Gastrocnemius medialis (tissue), 4 donors: ENCODE measurements at regions of chr6 and their contacts with region 1.

Region 1: DNA sequence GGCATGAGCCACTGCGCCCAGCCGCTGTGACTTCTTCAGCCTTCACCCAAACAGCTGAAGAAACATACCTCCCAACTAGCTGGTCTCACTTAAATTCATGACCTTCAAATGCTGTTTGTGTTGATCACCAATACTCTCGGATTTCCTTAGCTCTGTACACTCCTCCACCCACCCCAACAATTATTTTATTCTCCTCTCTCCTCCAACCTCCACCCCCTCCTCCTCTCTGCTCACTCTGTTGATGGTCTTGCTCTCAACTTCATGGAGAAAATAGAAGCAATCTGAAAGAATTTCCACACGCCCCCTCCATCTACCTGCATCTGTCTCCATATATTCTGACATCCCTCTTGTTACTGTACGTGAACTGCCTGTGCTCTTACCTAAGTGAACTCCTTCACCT is 6.6 kb upstream of the DLK2 start:
- DNase-seq: no peak
- ATAC-seq: no peak
- H3K4me3 ChIP-seq: no peak overlapping the region
- H3K27ac ChIP-seq: no peak overlapping the region
- H3K4me1 ChIP-seq: no peaks in the 10 kb centered on the region
- H3K27me3 ChIP-seq: peaks cover 15 to 34% (median 20%) of the 10 kb centered on the region in 3 donors
- CTCF ChIP-seq: no peak
- POLR2A ChIP-seq: no peak

Region 2: DNA sequence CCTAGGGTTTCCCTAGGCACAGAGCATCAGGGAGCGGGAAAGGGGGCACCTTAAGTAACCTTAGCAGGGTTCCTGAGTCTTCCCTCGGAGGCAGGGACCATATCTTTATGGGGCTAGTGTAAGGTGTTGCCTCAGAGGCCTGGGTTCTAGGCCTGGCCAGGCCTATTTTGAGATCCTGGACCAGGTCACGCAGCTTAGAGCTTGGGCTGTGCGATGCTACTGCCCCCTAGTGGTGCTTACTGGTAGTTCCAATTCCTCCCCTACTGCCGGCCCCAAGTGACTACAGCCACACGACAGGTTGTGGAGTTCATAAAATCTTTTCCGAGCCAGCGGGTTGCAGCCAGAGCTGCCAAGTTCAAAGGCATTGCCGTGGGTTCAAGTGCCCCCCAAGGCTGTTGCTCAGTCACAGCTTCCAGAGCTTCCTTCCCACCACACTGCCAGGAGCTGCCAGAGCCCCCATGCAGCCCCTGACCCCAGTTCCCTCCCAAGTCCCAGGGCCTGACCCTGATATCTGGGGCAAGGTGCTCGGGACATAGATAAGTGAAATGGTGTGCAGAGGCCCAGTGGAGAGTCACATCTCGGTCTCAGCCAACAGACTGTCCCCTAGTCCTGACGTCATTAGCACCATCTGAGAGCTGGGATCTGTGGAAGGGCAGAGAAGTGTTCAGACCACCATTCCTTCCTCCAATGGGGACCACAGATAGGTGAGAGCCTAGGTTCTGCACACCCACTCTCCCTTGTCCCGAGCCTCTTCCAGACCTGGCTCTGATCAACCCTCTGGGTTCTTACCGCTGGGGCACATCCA is 44.9 kb after region 1 on chr6:
- in situ Hi-C with region 1: loop called (anchors 5 to 10 kb)
- intact Hi-C with region 1: no loop called
- DNase-seq: peak; percentile 52 to 75
- ATAC-seq: peak; percentile 70 to 79
- H3K4me3 ChIP-seq: no peak overlapping the region
- H3K27ac ChIP-seq: no peak overlapping the region
- H3K4me1 ChIP-seq: peaks cover 7 to 12% of the 10 kb centered on the region in 2 donors
- H3K27me3 ChIP-seq: peaks cover 4 to 7% (median 6%) of the 10 kb centered on the region in 3 donors
- CTCF ChIP-seq: peak; percentile 83 to 98 (median 96)
- POLR2A ChIP-seq: no peak